Tibial artery (tissue), 4 donors: ENCODE measurements at regions of chr17 and their contacts with region 1.

Region 1: GRCh38 chr17:45098869-45099616 is 33.3 kb downstream of the PLCD3 start:
- DNase-seq: peak; percentile 91 to 94
- H3K4me3 ChIP-seq: no peak overlapping the region
- H3K27ac ChIP-seq: peak overlapping the region; percentile 67 to 84
- H3K4me1 ChIP-seq: peaks cover 0 to 60% (median 36%) of the 10 kb centered on the region in 4 donors
- H3K27me3 ChIP-seq: no peaks in the 10 kb centered on the region
- CTCF ChIP-seq: peak; percentile 91 to 93

Region 2: DNA sequence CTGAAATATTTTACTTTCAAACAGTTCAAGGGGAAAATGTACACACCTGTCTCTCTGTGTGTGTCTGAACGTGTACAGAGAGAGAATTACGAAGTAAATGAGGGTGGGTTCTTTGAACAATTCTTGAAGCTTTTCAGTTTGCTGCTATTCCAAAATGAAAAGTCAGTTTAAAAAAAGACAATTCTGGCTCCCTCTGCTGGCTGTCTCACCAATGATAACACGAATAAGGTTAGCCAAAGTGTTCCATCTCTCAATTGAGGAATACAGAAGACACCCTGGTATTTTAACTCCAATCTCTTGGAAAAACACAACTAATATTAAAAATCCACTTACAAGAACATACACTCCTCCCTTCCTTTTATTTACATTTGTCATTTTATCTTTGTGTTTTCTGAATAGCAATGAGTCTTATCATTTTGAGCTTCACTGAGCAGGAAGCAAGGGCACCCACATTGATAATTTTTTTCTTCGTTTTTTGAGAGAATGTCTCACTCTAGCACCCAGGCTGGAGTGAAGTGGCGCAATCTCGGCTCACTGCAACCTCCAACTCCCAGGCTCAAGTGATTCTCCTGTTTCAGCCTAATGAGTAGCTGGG is 220.3 kb before region 1 on chr17:
- intact Hi-C with region 1: no loop called
- DNase-seq: no peak
- H3K4me3 ChIP-seq: no peak overlapping the region
- H3K27ac ChIP-seq: no peak overlapping the region
- H3K4me1 ChIP-seq: no peaks in the 10 kb centered on the region
- H3K27me3 ChIP-seq: no peaks in the 10 kb centered on the region
- CTCF ChIP-seq: peak; percentile 47 to 57

Region 3: DNA sequence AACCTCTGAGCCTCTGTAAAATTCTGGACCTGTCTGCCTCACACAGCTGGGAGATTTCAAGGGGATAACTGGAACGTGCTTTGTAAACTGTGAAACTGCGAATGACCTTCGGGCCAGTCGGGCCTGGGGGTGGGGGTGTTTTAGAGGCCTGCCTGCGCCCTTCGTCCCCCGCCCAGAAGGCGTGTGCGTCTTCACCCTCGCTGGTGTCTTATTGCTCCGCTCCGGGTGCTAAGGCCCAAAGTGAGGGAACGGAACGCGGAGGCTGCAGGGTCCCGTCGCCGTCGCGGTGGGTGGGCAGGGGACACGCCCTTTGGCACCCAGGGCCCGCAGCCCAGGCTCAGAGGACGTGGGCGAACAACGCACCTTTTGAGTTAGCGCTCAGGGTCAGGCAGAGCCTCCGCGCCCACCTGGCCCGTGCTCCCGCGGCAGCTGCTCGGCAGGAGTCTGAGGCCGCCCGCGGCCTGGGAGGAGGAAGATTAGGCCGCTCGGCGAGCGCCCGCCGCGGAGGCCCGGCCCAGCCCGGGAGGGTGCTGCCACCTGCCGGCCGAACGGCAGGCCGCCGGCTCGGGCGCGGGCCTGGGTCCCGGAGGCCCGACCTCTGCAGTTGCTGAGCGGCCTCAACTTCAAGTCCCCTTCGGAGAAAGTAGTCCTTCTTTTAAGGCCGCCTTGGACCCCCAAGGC is 77.3 kb before region 1 on chr17:
- intact Hi-C with region 1: loop called (anchors 5 kb)
- DNase-seq: peak; percentile 54 to 80
- H3K4me3 ChIP-seq: peak overlapping the region; percentile 45 to 53
- H3K27ac ChIP-seq: peak overlapping the region; percentile 60 to 73
- H3K4me1 ChIP-seq: peaks cover 0 to 45% (median 24%) of the 10 kb centered on the region in 4 donors
- H3K27me3 ChIP-seq: peaks cover 0 to 3% of the 10 kb centered on the region in 2 donors
- CTCF ChIP-seq: peak; percentile 85 to 90

Region 4: GRCh38 chr17:45032174-45032541 is 66.9 kb before region 1 on chr17:
- intact Hi-C with region 1: no loop called
- DNase-seq: no peak
- H3K4me3 ChIP-seq: no peak overlapping the region
- H3K27ac ChIP-seq: no peak overlapping the region
- H3K4me1 ChIP-seq: peaks cover 0 to 4% (median 0%) of the 10 kb centered on the region in 4 donors
- H3K27me3 ChIP-seq: no peaks in the 10 kb centered on the region
- CTCF ChIP-seq: no peak

Region 5: GRCh38 chr17:45051060-45051719 is 47.9 kb before region 1 on chr17 and contains the start of gene DCAKD:
- intact Hi-C with region 1: loop called (anchors 5 kb)
- DNase-seq: peak; percentile 93 to 96
- H3K4me3 ChIP-seq: peak within 1 kb of the TSS; percentile 60 to 75
- H3K27ac ChIP-seq: peak within 1 kb of the TSS; percentile 94 to 95
- H3K4me1 ChIP-seq: peaks cover 0 to 38% (median 17%) of the 10 kb centered on the region in 4 donors
- H3K27me3 ChIP-seq: no peaks in the 10 kb centered on the region
- CTCF ChIP-seq: peak in 1 of 2 experiments; percentile 36

Region 6: GRCh38 chr17:45132572-45133463 is 33.8 kb after region 1 on chr17:
- intact Hi-C with region 1: loop called (anchors 5 kb)
- DNase-seq: peak; percentile 88 to 92
- H3K4me3 ChIP-seq: peak overlapping the region; percentile 70 to 94
- H3K27ac ChIP-seq: peak overlapping the region; percentile 98 to 99
- H3K4me1 ChIP-seq: peaks cover 6 to 64% (median 52%) of the 10 kb centered on the region in 4 donors
- H3K27me3 ChIP-seq: no peaks in the 10 kb centered on the region
- CTCF ChIP-seq: peak; percentile 88 to 93